Activated CD8-positive, alpha-beta T cell treated with anti-CD3 and anti-CD28 coated beads for 36 hours (primary cell): ENCODE measurements at regions of chr3 and their contacts with region 1.

Region 1: DNA sequence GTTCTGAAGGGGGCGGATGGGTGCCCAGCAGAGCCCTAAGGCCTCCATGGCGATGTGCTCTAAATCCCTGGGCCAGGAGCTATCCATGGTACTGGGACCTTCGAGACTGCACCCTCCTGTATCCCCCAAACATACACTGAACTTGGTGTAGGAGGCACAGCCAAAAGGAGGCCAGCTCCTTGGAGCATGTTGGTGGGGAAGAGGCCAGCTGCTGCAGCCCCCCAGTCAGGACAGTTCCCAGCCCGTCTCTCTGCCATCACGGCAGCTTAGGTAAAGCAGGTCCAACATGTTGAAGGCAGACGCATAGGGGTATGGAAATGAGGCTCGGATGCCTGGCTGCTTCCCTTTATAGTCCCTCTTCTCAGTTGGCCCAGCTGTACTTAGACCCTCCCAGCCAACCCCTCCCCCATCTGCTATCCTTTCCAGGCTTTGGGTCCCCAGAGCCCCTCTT is 1.8 kb downstream of the CAMKV start:
- DNase-seq: peak; percentile 56
- ATAC-seq: peak; percentile 26
- H3K4me3 Mint-ChIP-seq: no peak overlapping the region
- H3K27ac Mint-ChIP-seq: no peak overlapping the region
- H3K4me1 Mint-ChIP-seq: peaks cover 1% of the 10 kb centered on the region
- H3K27me3 Mint-ChIP-seq: peaks cover 38% of the 10 kb centered on the region
- CTCF ChIP-seq: no peak

Region 2: GRCh38 chr3:49856181-49857005 is 11.5 kb before region 1 on chr3 and contains the start of gene TRAIP:
- CTCF ChIA-PET with region 1: interaction called, 5 read pairs
- POLR2A ChIA-PET with region 1: interaction called, 17 read pairs
- intact Hi-C with region 1: no loop called
- DNase-seq: peak; percentile 96
- ATAC-seq: peak; percentile 99
- H3K4me3 Mint-ChIP-seq: peak within 1 kb of the TSS; percentile 98
- H3K27ac Mint-ChIP-seq: peak within 1 kb of the TSS; percentile 88
- H3K4me1 Mint-ChIP-seq: peaks cover 12% of the 10 kb centered on the region
- H3K27me3 Mint-ChIP-seq: no peaks in the 10 kb centered on the region
- CTCF ChIP-seq: no peak
- total RNA-seq, gene TRAIP: 23.2 to 25.1 TPM

Region 3: GRCh38 chr3:49896345-49896744 is 28.4 kb after region 1 on chr3:
- CTCF ChIA-PET with region 1: no interaction called
- POLR2A ChIA-PET with region 1: no interaction called
- intact Hi-C with region 1: no loop called
- DNase-seq: no peak
- ATAC-seq: no peak
- H3K4me3 Mint-ChIP-seq: no peak overlapping the region
- H3K27ac Mint-ChIP-seq: no peak overlapping the region
- H3K4me1 Mint-ChIP-seq: no peaks in the 10 kb centered on the region
- H3K27me3 Mint-ChIP-seq: no peaks in the 10 kb centered on the region
- CTCF ChIP-seq: no peak

Region 4: DNA sequence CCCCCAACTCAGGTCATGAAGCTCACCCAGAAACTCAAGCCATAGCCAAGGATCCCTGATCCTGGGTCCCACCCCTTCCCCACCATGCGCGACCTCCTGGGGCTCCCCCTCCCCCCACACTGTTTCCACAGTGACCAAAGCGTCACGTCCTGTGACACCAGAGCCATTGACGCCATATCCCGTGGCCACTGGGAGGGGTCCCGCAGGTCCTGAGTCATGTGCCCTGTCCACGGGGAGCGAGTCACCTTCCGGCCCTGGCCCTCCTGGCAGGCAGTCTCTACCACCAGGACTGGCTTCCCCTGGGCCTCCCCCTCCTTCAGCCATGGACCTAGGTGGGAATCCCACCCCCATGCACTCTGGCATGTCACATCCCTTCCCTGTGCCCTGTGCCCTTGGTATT is 302.8 kb after region 1 on chr3:
- CTCF ChIA-PET with region 1: no interaction called
- POLR2A ChIA-PET with region 1: no interaction called
- intact Hi-C with region 1: no loop called
- DNase-seq: no peak
- ATAC-seq: peak; percentile 13
- H3K4me3 Mint-ChIP-seq: no peak overlapping the region
- H3K27ac Mint-ChIP-seq: no peak overlapping the region
- H3K4me1 Mint-ChIP-seq: peaks cover 1% of the 10 kb centered on the region
- H3K27me3 Mint-ChIP-seq: no peaks in the 10 kb centered on the region
- CTCF ChIP-seq: no peak